Activated CD4-positive, alpha-beta memory T cell treated with anti-CD3 and anti-CD28 coated beads, Interleukin-2, amount 10 ng/mL, durations not matched to agents 7 days and 5 days (primary cell): ENCODE measurements at regions of chr12 and their contacts with region 1.

Region 1: GRCh38 chr12:55073043-55074022 is 52.9 kb upstream of the OR9K2 start:
- DNase-seq: peak; percentile 79
- H3K4me3 Mint-ChIP-seq: no peak overlapping the region
- H3K27ac Mint-ChIP-seq: no peak overlapping the region
- H3K4me1 Mint-ChIP-seq: peaks cover under 1% of the 10 kb centered on the region
- H3K27me3 Mint-ChIP-seq: peaks cover 19% of the 10 kb centered on the region

Region 2: GRCh38 chr12:54723379-54724256 is 349.7 kb before region 1 on chr12:
- CTCF ChIA-PET with region 1: interaction called, 23 read pairs
- POLR2A ChIA-PET with region 1: no interaction called
- DNase-seq: peak; percentile 42
- H3K4me3 Mint-ChIP-seq: no peak overlapping the region
- H3K27ac Mint-ChIP-seq: no peak overlapping the region
- H3K4me1 Mint-ChIP-seq: peaks cover 9% of the 10 kb centered on the region
- H3K27me3 Mint-ChIP-seq: peaks cover 25% of the 10 kb centered on the region

Region 3: GRCh38 chr12:54759751-54760150 is 313.6 kb before region 1 on chr12:
- CTCF ChIA-PET with region 1: interaction called, 16 read pairs
- POLR2A ChIA-PET with region 1: no interaction called
- DNase-seq: peak; percentile 24
- H3K4me3 Mint-ChIP-seq: no peak overlapping the region
- H3K27ac Mint-ChIP-seq: no peak overlapping the region
- H3K4me1 Mint-ChIP-seq: peaks cover 11% of the 10 kb centered on the region
- H3K27me3 Mint-ChIP-seq: peaks cover 6% of the 10 kb centered on the region

Region 4: GRCh38 chr12:54958048-54958658 is 115.2 kb before region 1 on chr12:
- CTCF ChIA-PET with region 1: interaction called, 58 read pairs
- POLR2A ChIA-PET with region 1: no interaction called
- DNase-seq: peak; percentile 49
- H3K4me3 Mint-ChIP-seq: no peak overlapping the region
- H3K27ac Mint-ChIP-seq: no peak overlapping the region
- H3K4me1 Mint-ChIP-seq: peaks cover 73% of the 10 kb centered on the region
- H3K27me3 Mint-ChIP-seq: no peaks in the 10 kb centered on the region

Region 5: GRCh38 chr12:54977155-54977554 is 96.2 kb before region 1 on chr12:
- CTCF ChIA-PET with region 1: interaction called, 17 read pairs
- POLR2A ChIA-PET with region 1: no interaction called
- DNase-seq: no peak
- H3K4me3 Mint-ChIP-seq: peak overlapping the region; percentile 79
- H3K27ac Mint-ChIP-seq: peak overlapping the region; percentile 13
- H3K4me1 Mint-ChIP-seq: peaks cover 90% of the 10 kb centered on the region
- H3K27me3 Mint-ChIP-seq: no peaks in the 10 kb centered on the region

Region 6: DNA sequence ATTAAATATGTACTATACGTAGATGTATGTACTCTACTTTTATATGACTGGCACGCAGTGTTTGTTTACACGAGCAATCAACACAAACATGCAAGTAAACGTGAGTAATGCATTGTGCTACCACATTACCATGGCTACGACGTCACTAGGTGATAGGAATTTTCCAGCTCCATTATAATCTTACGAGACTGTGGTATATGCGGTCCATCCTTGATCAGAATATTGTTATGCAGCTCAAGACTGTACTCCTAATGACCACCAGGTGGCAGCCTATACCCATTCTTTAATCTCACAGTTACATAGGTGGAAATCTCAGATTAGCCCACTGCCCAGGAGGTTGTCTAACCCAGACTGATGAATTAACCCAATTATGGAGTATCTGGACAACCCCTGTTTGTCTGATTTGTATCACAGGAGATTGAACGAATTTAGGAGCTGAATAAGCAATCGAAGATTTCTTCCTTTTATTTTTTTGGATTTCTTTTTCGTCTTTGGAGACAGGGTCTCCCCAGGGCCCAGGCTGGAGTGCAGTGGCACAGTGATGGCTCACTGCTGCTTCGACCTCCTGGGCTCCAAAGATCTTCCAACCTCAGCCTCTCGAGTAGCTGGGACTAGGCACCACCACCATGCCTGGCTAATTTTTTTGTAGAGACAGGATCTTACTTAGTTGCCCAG is 80.0 kb before region 1 on chr12:
- CTCF ChIA-PET with region 1: interaction called, 452 read pairs
- POLR2A ChIA-PET with region 1: interaction called, 14 read pairs
- DNase-seq: peak; percentile 60
- H3K4me3 Mint-ChIP-seq: no peak overlapping the region
- H3K27ac Mint-ChIP-seq: no peak overlapping the region
- H3K4me1 Mint-ChIP-seq: peaks cover 40% of the 10 kb centered on the region
- H3K27me3 Mint-ChIP-seq: no peaks in the 10 kb centered on the region

Region 7: DNA sequence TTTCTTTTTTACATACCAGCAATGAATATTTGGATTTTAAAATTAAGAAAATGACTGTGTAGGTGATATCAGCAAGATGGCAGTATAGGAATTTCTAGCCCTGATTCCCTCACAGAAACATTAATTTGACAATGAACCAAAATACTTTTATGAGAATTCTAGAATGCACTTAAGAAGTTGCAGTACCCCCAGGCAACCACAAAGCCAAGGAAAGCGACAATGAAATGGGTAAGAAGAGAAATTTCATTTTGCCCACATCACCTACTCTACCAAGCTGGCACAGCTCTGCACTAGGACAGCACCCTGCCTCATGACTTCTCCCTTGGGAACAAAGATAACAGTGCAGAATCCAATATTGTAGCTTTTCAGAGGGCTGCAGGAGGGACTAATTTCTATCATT is 59.5 kb after region 1 on chr12:
- CTCF ChIA-PET with region 1: no interaction called
- POLR2A ChIA-PET with region 1: no interaction called
- DNase-seq: no peak
- H3K4me3 Mint-ChIP-seq: no peak overlapping the region
- H3K27ac Mint-ChIP-seq: no peak overlapping the region
- H3K4me1 Mint-ChIP-seq: no peaks in the 10 kb centered on the region
- H3K27me3 Mint-ChIP-seq: peaks cover 48% of the 10 kb centered on the region